CD8-positive, alpha-beta T cell (primary cell): ENCODE measurements at regions of chr2 and their contacts with region 1.

Region 1: DNA sequence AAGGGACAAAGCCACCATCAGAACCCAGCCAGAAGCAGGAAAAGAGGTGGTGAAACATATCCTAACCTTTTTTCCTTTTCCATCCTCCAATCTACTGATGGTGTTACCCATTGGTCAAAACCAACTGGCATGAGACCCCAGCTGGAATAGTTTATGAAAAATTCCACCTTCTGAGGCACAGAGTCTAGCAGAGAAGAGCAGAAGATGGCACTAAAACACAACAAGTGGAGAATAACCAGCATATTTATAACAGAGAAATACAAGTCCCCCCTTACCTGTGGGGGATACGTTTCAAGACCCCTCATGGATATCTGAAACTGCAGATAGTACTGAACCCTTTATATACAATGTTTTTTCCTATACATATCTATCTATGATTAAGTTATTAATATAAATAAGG is 4.9 kb upstream of the INPP1 start:
- DNase-seq: peak in 1 of 9 experiments; percentile 19
- ATAC-seq: no peak
- H3K4me3 ChIP-seq: no peak overlapping the region
- H3K4me3 Mint-ChIP-seq: no peak overlapping the region
- H3K27ac ChIP-seq: no peak overlapping the region
- H3K27ac Mint-ChIP-seq: no peak overlapping the region
- H3K4me1 ChIP-seq: peaks cover 3% of the 10 kb centered on the region
- H3K4me1 Mint-ChIP-seq: peaks cover 3% of the 10 kb centered on the region
- H3K27me3 ChIP-seq: no peaks in the 10 kb centered on the region
- H3K27me3 Mint-ChIP-seq: peaks cover 2% of the 10 kb centered on the region
- CTCF ChIP-seq: peak; percentile 33

Region 2: DNA sequence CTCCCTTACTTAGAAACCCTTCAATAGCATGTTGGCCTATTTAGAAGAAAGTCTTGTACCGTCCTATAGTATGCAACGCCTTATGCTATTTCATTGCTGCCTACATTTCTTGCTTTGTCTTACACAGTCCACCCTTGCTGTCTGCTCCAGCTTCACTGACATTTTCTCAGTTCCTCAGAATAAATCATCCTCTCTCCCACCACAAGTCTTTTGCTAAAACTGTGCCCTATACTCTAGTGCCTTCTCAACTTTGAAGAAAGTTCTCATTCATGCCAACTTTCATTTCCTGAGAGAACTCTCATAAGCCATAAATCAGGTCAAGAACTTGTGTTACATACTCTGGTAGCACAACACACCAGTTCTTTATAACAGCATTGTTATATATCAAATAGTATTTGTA is 1418.6 kb before region 1 on chr2:
- CTCF ChIA-PET with region 1: no interaction called
- POLR2A ChIA-PET with region 1: no interaction called
- intact Hi-C with region 1: no loop called
- DNase-seq: no peak
- ATAC-seq: no peak
- H3K4me3 ChIP-seq: no peak overlapping the region
- H3K4me3 Mint-ChIP-seq: no peak overlapping the region
- H3K27ac ChIP-seq: no peak overlapping the region
- H3K27ac Mint-ChIP-seq: no peak overlapping the region
- H3K4me1 ChIP-seq: no peaks in the 10 kb centered on the region
- H3K4me1 Mint-ChIP-seq: no peaks in the 10 kb centered on the region
- H3K27me3 ChIP-seq: no peaks in the 10 kb centered on the region
- H3K27me3 Mint-ChIP-seq: no peaks in the 10 kb centered on the region
- CTCF ChIP-seq: no peak

Region 3: GRCh38 chr2:190376591-190377245 is 38.3 kb after region 1 on chr2:
- CTCF ChIA-PET with region 1: no interaction called
- POLR2A ChIA-PET with region 1: no interaction called
- intact Hi-C with region 1: loop called (anchors 1 to 2 kb)
- DNase-seq: no peak
- ATAC-seq: no peak
- H3K4me3 ChIP-seq: no peak overlapping the region
- H3K4me3 Mint-ChIP-seq: no peak overlapping the region
- H3K27ac ChIP-seq: no peak overlapping the region
- H3K27ac Mint-ChIP-seq: no peak overlapping the region
- H3K4me1 ChIP-seq: no peaks in the 10 kb centered on the region
- H3K4me1 Mint-ChIP-seq: no peaks in the 10 kb centered on the region
- H3K27me3 ChIP-seq: peaks cover 0 to 2% of the 10 kb centered on the region in 2 experiments
- H3K27me3 Mint-ChIP-seq: no peaks in the 10 kb centered on the region
- CTCF ChIP-seq: no peak

Region 4: DNA sequence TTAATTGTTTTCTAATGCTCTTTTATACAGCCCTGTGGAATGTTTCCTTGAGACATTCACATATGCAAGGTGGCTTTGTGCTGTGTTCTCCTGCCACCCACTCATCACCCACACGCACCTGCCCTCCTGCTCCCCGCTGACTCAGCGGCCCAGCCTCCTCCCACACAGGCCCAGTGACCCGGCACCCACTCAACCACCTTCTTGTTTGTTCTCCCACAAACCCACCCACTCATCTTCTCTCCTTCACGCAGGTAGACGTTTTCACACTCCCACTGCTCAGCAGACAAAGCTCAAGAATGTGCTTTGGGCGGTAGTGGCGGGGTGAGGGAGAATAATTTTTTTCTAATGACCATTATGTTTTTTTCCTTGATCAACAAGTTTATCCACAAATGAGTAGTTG is 224.7 kb after region 1 on chr2:
- CTCF ChIA-PET with region 1: no interaction called
- POLR2A ChIA-PET with region 1: no interaction called
- intact Hi-C with region 1: no loop called
- DNase-seq: peak in 6 of 9 experiments; percentile 6 to 48 (median 28)
- ATAC-seq: peak; percentile 79
- H3K4me3 ChIP-seq: no peak overlapping the region
- H3K4me3 Mint-ChIP-seq: peak overlapping the region; percentile 10
- H3K27ac ChIP-seq: no peak overlapping the region
- H3K27ac Mint-ChIP-seq: peak overlapping the region; percentile 58
- H3K4me1 ChIP-seq: peaks cover 13% of the 10 kb centered on the region
- H3K4me1 Mint-ChIP-seq: peaks cover 17% of the 10 kb centered on the region
- H3K27me3 ChIP-seq: no peaks in the 10 kb centered on the region
- H3K27me3 Mint-ChIP-seq: no peaks in the 10 kb centered on the region
- CTCF ChIP-seq: no peak